ENCODE measurements at regions of chr9 and their contacts with region 1.

Region 1: DNA sequence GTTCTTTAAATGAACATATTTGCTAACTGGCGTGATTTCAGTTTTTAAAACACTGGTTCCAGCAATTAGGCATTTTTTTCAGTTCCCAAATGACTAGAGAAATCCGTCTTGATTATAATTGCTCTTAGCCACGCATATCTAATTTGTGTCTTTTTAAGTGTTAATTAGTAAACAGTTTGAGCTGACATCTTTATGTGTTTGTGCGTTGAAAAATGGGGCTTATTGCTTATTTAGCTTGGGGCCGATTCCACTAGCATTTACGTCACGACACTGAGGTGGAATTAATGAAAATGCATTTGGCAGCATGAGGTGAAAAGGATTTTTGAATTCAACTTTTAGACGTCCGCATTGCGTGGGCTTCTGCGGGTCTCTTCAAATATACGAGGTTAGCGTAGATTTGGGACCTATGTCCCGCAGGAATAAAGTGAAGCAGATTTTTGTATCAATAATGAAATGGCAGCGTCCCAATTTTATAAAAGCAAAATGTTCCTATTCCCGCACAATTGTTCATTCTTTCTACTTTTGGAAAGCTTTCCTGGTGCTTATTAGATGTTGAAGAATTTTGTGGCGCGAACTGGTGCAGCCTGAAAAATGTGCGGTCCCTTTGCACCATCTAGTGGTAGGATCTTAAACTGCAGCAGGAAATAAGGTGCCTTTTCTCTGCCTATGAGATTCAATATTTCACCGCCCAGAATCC is 122.7 kb upstream of the LMX1B start:
- DNase-seq: peak; percentile 72
- H3K4me3 Mint-ChIP-seq: no peak overlapping the region
- H3K27ac Mint-ChIP-seq: no peak overlapping the region
- H3K4me1 Mint-ChIP-seq: peaks cover 10% of the 10 kb centered on the region
- H3K27me3 Mint-ChIP-seq: peaks cover 2% of the 10 kb centered on the region

Region 2: DNA sequence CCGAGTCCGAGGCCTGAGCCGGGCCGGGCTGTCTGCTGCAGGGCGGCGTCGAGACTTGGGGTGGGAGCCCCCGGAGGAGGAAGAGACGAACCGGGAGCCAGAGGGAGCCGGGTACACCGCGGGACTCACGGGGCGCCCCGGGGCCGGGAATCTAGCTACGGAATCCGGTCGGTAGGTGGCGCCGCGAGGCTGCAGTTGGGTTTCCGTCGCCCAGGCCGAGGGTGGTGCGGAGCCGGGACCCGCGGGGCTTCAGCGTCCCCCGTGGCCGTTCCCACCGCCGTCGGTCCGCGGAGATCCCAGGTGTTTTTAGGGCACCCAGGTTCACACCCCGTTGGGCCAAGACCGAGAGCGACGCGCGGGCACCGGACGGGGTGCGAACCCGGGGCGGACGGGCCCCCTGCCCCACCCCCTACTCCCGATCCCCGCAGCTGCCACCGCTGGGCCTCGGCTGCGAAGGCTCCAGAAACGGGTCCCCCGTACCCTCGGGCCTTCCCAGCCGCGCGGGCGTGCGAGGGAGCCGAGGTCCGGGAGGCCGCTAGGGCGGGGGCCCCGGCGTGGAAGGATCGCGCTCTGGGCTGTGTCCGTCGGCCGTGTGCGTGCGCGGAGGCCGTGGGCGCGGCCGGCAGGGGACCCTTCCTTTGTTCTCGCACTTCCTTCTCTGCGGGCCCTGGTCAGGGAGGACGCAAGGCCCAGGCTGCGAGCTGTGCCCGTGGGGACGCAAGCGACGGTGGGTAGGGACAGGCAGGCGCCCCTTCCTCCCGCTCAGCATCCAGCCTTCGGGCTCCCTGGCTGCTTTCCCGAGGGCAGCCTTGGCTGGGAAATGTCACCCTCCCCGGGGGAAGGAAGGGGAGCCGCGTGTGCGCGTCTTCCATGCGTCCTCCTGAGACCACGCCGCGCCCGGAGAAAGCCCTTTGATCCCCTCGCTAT is 1082.8 kb before region 1 on chr9:
- CTCF ChIA-PET with region 1: interaction called, 10 read pairs
- intact Hi-C with region 1: loop called (anchors 5 kb)
- DNase-seq: peak; percentile 83
- H3K4me3 Mint-ChIP-seq: peak overlapping the region; percentile 66
- H3K27ac Mint-ChIP-seq: no peak overlapping the region
- H3K4me1 Mint-ChIP-seq: peaks cover 9% of the 10 kb centered on the region
- H3K27me3 Mint-ChIP-seq: peaks cover 23% of the 10 kb centered on the region

Region 3: DNA sequence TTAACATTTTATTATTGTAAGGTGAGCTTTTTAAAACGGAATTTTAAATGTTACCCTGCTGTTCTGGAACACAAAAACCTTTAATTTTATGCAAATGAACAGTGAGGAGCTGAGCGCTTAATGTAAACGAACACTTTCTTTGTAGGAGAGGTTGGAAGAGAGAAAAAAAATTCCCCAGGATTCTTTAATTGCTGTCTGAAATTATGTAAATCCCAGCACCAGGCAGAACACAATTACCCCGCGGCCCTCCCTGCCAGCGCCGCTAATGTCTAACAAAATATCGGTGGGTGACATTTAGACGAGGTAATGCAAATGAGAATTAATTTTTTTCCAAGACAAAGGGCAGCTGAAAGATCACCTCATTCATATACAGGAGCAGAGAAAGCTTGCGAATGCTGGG is 307.8 kb before region 1 on chr9:
- CTCF ChIA-PET with region 1: no interaction called
- intact Hi-C with region 1: no loop called
- DNase-seq: no peak
- H3K4me3 Mint-ChIP-seq: no peak overlapping the region
- H3K27ac Mint-ChIP-seq: no peak overlapping the region
- H3K4me1 Mint-ChIP-seq: no peaks in the 10 kb centered on the region
- H3K27me3 Mint-ChIP-seq: peaks cover 51% of the 10 kb centered on the region

Region 4: DNA sequence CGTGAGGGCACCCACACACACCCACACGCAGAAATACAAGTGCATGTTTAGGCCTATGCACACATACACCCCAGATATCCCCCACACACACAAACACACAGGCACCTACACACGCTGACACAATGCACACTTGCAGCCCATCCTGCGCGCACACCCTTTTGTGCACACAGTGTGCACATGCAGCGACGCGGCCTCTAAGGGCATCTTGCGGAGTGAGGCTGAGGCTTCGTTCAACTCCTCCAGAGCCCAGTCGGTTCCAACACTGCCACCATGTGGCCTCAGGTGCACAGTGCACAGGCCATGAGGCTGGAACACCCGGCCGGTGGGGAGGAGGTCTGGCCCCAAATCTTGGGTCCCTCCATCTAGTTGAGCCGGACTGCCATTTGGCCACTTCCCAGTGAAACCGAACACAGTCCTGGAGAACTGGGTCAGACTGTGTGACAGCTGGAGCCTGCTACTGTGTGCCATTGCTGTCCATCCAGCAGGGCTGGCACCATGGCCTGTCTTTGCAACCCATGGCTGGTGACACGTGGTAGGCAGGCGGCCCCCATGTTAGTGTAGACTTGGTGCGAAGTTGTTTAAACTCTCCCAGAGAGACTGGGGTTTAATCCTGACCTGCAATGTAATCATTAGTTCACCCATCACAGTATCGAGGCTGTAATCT is 262.1 kb before region 1 on chr9:
- CTCF ChIA-PET with region 1: interaction called, 5 read pairs
- intact Hi-C with region 1: loop called (anchors 5 kb)
- DNase-seq: peak; percentile 81
- H3K4me3 Mint-ChIP-seq: no peak overlapping the region
- H3K27ac Mint-ChIP-seq: no peak overlapping the region
- H3K4me1 Mint-ChIP-seq: no peaks in the 10 kb centered on the region
- H3K27me3 Mint-ChIP-seq: peaks cover 30% of the 10 kb centered on the region

Region 5: DNA sequence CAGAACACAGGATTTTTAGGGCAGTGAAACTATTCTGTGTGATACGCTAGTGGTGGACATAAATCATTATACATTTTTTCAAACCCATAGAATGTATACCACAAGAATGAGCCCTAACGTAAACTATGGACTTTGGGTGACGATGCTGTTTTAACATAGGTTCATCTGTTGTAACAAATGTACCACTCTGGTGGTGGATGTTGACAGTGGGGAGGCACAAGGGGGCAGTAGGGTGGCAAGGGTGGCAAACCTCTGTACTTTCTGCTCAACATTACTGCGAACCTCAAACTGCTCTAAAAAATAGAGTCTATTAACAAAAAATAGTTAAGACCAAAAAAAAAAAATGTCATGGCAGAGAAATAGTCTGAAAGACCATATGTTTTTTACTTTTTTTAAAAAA is 173.5 kb before region 1 on chr9:
- CTCF ChIA-PET with region 1: interaction called, 8 read pairs
- intact Hi-C with region 1: loop called (anchors 1 kb)
- DNase-seq: peak; percentile 45
- H3K4me3 Mint-ChIP-seq: no peak overlapping the region
- H3K27ac Mint-ChIP-seq: no peak overlapping the region
- H3K4me1 Mint-ChIP-seq: no peaks in the 10 kb centered on the region
- H3K27me3 Mint-ChIP-seq: no peaks in the 10 kb centered on the region

Region 6: GRCh38 chr9:126411225-126411947 is 79.6 kb before region 1 on chr9:
- CTCF ChIA-PET with region 1: interaction called, 3 read pairs
- intact Hi-C with region 1: loop called (anchors 5 kb)
- DNase-seq: peak; percentile 68
- H3K4me3 Mint-ChIP-seq: peak overlapping the region; percentile 35
- H3K27ac Mint-ChIP-seq: peak overlapping the region; percentile 72
- H3K4me1 Mint-ChIP-seq: peaks cover 33% of the 10 kb centered on the region
- H3K27me3 Mint-ChIP-seq: no peaks in the 10 kb centered on the region

Region 7: DNA sequence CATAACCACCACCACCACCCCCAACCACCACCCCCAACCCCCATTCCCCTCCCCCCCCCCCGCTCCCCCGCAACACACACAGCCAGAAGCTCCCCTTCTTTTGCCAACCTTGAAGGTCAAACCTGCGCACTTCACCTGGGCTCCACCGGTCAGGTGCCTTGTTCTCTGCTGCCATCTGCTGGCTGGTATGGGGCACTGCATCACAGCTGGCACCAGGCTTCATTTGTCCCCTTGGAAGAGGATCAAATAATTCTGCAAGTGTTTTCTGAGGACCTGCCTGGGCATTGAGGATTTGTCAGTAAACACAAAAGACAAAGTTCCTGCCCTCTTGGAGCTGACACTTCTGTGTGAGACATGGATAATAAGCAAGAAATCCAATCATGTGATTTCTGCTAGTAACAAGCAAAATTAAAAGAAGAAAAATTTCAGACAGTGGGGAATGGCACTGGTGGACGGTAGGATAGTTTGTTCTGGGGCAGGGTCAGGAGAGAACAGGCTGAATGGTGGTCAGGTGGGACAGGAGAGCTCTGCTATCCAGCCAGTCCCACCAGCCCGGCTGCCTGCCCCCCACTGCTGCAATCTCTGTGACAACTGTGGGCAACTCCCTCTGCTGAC is 67.1 kb after region 1 on chr9:
- CTCF ChIA-PET with region 1: interaction called, 11 read pairs
- intact Hi-C with region 1: no loop called
- DNase-seq: peak; percentile 79
- H3K4me3 Mint-ChIP-seq: no peak overlapping the region
- H3K27ac Mint-ChIP-seq: no peak overlapping the region
- H3K4me1 Mint-ChIP-seq: no peaks in the 10 kb centered on the region
- H3K27me3 Mint-ChIP-seq: peaks cover 28% of the 10 kb centered on the region

Measured in activated naive CD4-positive, alpha-beta T cell treated with anti-CD3 and anti-CD28 coated beads for 36 hours (primary cell).